ENCODE measurements at regions of chr22 and their contacts with region 1.

Region 1: DNA sequence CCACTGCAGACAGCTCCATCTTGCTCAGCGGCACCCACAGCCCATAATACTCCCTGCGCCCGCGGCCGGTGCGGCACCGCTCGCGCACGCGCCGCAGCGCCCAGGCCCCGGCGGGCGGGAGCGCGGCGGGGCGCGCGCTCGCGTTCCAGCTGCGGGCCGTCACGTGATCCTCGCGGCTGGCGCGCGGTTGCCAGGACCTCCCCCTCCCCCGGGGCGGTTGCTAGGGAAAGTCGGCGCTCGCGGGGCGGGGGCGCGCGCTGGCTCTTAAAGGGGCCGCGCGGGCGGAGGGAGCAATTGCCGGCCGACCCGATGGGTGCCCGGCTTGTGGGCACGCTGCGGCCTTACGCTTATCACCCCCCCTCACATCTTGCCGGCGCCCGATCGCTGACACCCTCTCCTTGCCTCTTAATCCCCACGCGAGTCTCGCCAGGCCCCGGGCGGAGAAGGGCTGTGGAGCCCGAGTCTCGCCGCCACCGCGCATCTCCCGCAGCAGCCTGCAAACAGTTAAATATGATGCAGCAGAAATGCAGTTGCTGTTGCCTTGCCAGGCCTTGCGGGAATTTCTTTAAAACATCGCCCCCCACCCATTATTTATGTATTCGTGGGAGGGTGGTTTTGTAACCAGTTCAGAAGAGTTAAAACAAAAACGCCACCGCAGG is at the start of gene CBX6:
- DNase-seq: peak; percentile 73 to 97
- H3K4me3 ChIP-seq: peak within 1 kb of the TSS; percentile 83
- H3K27ac ChIP-seq: peak within 1 kb of the TSS; percentile 62
- H3K4me1 ChIP-seq: peaks cover 28% of the 10 kb centered on the region
- H3K27me3 ChIP-seq: no peaks in the 10 kb centered on the region
- CTCF ChIP-seq: no peak
- total RNA-seq, gene CBX6: 131 and 136 TPM in 2 replicates

Region 2: GRCh38 chr22:38981992-38982927 is 110.0 kb after region 1 on chr22 and contains the start of gene APOBEC3B:
- CTCF ChIA-PET with region 1: no interaction called
- POLR2A ChIA-PET with region 1: no interaction called
- intact Hi-C with region 1: loop called (anchors 1 kb)
- DNase-seq: peak; percentile 94 to 99
- H3K4me3 ChIP-seq: peak within 1 kb of the TSS; percentile 58
- H3K27ac ChIP-seq: peak within 1 kb of the TSS; percentile 94
- H3K4me1 ChIP-seq: peaks cover 47% of the 10 kb centered on the region
- H3K27me3 ChIP-seq: no peaks in the 10 kb centered on the region
- CTCF ChIP-seq: no peak
- total RNA-seq, gene APOBEC3B: 66.5 and 83.6 TPM in 2 replicates

Region 3: GRCh38 chr22:39117585-39118191 is 245.4 kb after region 1 on chr22:
- CTCF ChIA-PET with region 1: no interaction called
- POLR2A ChIA-PET with region 1: no interaction called
- intact Hi-C with region 1: loop called (anchors 1 kb)
- DNase-seq: peak; percentile 50 to 58
- H3K4me3 ChIP-seq: no peak overlapping the region
- H3K27ac ChIP-seq: no peak overlapping the region
- H3K4me1 ChIP-seq: peaks cover 18% of the 10 kb centered on the region
- H3K27me3 ChIP-seq: no peaks in the 10 kb centered on the region
- CTCF ChIP-seq: peak; percentile 80

Region 4: DNA sequence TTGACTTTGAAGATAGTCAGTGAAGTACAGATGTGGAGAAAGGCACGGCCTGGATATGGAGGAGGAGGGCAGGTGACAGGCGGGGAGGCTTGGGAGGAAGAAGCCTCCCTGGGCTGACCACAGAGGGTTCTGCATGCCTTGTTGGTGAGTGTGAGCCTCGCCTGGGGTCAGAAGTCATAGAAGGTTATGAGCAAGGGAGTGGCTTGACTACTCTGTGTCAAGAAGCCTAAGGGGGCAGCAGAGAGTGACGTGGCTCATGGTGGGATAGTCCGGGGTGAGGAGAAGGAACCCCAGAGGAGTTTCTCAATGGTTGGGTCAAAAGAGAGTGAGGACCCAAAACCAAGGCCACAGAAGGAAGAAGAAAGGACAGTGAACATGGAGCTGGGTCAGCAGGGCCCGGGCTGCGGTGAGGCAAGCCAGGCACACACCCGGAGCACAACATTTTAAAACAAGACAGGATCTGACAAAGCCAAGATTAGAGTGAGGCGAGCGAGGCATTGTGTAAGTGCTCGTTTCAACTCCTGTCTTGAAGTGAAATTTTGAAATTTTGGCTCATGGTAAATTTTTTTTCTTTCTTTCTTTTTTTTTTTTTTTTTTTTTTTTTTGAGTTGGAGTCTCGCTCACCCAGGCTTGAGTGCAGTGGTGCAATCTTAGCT is 340.5 kb after region 1 on chr22:
- CTCF ChIA-PET with region 1: interaction called, 3 read pairs
- POLR2A ChIA-PET with region 1: interaction called, 29 read pairs
- intact Hi-C with region 1: no loop called
- DNase-seq: peak; percentile 93 to 99
- H3K4me3 ChIP-seq: peak overlapping the region; percentile 41; the same call in 1 of the 2 replicates
- H3K27ac ChIP-seq: peak overlapping the region; percentile 87
- H3K4me1 ChIP-seq: peaks cover 55% of the 10 kb centered on the region
- H3K27me3 ChIP-seq: no peaks in the 10 kb centered on the region
- CTCF ChIP-seq: peak; percentile 61; the same call in 1 of the 2 replicates

Region 5: DNA sequence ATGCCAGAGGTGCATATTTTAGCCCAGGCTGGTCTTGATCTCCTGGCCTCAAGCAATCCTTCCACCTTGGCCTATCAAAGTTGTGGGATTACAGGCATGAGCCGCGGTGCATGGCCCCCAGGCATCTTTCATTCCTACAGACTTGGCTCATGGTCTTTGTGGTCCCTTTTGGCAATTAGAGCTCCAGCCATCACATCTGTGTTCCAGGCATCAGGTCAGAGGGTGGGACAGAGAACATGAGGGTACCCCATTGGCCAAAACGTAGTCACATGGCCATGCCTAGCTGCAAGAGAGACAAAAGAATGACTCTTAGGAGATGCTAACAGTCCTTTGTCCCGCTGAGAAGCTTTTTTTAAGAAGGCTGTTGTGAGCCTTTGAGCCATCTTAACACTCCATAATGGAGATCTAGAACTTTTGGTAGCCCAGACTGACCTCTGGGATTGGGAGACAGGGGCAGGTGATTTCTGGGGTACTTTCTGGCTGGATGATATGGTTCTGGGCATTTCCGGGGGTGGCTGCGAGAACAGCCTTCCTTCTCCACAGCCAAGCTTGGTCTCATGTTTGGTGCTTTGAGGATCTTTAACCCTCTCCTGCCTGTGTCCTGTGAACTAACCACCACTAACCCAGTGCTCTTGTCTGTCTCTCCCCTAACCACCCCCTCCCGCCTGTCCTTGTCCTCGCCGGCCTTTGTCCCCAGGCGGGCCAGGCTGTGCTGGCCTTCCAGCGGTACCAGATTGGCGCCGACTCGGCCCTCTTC is 508.9 kb after region 1 on chr22:
- CTCF ChIA-PET with region 1: no interaction called
- POLR2A ChIA-PET with region 1: no interaction called
- intact Hi-C with region 1: no loop called
- DNase-seq: no peak
- H3K4me3 ChIP-seq: no peak overlapping the region
- H3K27ac ChIP-seq: no peak overlapping the region
- H3K4me1 ChIP-seq: no peaks in the 10 kb centered on the region; the same call in 1 of the 2 replicates
- H3K27me3 ChIP-seq: no peaks in the 10 kb centered on the region
- CTCF ChIP-seq: no peak

Region 6: DNA sequence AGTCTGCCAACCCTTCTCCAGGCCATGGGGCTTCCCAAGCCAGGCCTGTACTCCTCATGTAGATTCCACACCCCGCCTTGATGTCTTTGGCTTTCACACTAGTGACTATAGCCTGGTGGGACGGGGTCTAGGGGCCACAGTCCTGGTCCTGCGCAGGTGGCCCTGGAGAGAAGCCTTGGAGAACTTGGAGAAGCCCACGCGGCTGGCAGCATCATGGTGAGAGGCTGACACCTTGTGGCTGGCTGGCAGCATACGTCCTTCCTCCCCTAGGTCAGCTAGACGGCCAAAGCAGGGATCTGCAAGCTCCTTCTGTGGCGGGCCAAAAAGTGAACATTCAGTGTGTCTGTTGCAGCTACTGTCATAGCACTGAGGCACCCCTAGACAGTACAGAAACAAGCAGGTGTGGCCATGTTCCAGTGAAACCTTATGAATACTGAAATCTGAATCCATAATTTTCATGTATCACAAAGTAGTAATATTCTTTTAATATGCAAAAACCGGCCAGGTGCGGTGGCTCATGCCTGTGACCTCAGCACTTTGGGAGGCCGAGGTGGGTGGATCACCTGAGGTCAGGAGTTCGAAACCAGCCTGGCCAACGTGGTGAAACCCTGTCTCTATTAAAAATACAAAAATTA is 1164.4 kb after region 1 on chr22:
- CTCF ChIA-PET with region 1: no interaction called
- POLR2A ChIA-PET with region 1: no interaction called
- intact Hi-C with region 1: loop called (anchors 5 kb)
- DNase-seq: peak; percentile 65 to 73
- H3K4me3 ChIP-seq: no peak overlapping the region
- H3K27ac ChIP-seq: no peak overlapping the region
- H3K4me1 ChIP-seq: peaks cover 14% of the 10 kb centered on the region
- H3K27me3 ChIP-seq: no peaks in the 10 kb centered on the region; the same call in 1 of the 2 replicates
- CTCF ChIP-seq: peak; percentile 94